MCF 10A (cell line): ENCODE measurements at regions of chr22 and their contacts with region 1.

Region 1: GRCh38 chr22:20885557-20886323 is 26.9 kb downstream of the SNAP29 start:
- DNase-seq: peak; percentile 80
- H3K4me3 Mint-ChIP-seq: no peak overlapping the region
- H3K27ac Mint-ChIP-seq: peak overlapping the region; percentile 52
- H3K4me1 Mint-ChIP-seq: peaks cover 10% of the 10 kb centered on the region
- H3K27me3 Mint-ChIP-seq: no peaks in the 10 kb centered on the region
- CTCF ChIP-seq: peak; percentile 95

Region 2: DNA sequence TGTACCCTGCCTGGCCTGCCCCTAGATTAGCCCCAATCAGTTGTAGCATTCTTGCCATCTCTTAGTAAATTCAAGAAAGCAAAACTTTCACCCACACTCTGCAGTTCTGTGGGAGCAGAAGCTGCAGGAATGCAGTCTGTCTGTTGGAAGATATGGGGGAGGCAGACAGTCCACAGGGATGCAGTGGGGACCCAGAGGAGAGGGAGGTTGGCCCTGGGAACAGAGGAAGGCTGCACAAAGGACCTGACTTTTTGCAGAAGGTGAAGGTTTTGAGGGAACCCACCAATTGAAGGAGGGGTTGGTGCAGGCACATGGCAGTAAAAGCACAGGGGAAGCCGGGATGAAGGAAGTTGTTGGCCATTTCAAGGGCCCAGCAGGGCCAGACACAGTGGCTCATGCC is 10.4 kb before region 1 on chr22:
- CTCF ChIA-PET with region 1: interaction called, 10 read pairs
- POLR2A ChIA-PET with region 1: interaction called, 5 read pairs
- intact Hi-C with region 1: no loop called
- DNase-seq: no peak
- H3K4me3 Mint-ChIP-seq: no peak overlapping the region
- H3K27ac Mint-ChIP-seq: no peak overlapping the region
- H3K4me1 Mint-ChIP-seq: no peaks in the 10 kb centered on the region
- H3K27me3 Mint-ChIP-seq: no peaks in the 10 kb centered on the region
- CTCF ChIP-seq: no peak

Region 3: DNA sequence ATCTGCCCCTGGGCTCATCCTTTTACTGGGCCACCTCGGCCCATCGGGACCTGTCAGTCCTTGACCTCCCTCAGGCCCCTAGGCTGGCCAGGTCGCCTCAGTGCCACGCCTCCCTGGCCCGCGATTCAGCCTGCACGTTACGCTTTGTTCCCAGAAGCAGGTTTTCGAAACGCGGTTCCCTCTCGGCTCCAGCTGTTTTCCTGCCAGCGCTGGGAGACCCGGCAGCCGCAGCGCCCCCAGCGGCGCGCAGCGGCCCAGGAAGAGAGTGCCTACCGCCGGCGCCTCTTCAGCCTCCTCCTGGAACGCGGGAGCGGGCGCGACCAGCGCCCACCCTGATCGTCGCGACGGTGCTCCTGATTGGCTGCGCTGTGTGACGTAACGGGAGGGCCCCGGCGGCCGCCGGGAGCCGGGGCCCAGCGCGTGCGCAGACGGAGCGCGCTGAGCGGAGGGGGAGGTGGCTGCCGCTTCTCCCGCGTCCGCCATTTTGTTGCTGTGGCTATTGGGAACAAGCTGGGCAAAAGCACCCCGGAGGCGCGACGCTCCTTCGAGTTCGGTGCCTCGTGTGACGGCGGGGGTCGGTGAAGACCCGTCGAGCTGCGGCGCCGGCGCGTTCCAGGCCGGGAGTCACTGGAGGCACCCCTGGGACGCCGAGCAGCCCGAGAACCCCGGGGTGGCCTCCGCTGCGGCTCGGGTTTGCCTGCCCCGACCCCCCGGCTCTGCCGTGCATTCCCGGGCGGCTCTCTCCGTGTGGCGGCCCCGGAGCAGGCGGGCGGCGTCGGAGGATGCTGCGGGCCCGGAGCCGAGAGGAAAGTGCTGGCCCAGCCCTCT is 31.5 kb after region 1 on chr22 and contains the start of gene CRKL:
- CTCF ChIA-PET with region 1: interaction called, 14 read pairs
- POLR2A ChIA-PET with region 1: interaction called, 12 read pairs
- intact Hi-C with region 1: loop called (anchors 1 kb)
- DNase-seq: peak; percentile 97
- H3K4me3 Mint-ChIP-seq: peak within 1 kb of the TSS; percentile 68
- H3K27ac Mint-ChIP-seq: peak within 1 kb of the TSS; percentile 39
- H3K4me1 Mint-ChIP-seq: peaks cover 24% of the 10 kb centered on the region
- H3K27me3 Mint-ChIP-seq: no peaks in the 10 kb centered on the region
- CTCF ChIP-seq: peak; percentile 81
- total RNA-seq, gene CRKL: 74.0 and 76.1 TPM in 2 replicates

Region 4: GRCh38 chr22:20956258-20957065 is 70.7 kb after region 1 on chr22:
- CTCF ChIA-PET with region 1: interaction called, 16 read pairs
- POLR2A ChIA-PET with region 1: interaction called, 7 read pairs
- intact Hi-C with region 1: loop called (anchors 1 kb)
- DNase-seq: peak; percentile 77
- H3K4me3 Mint-ChIP-seq: peak overlapping the region; percentile 71
- H3K27ac Mint-ChIP-seq: no peak overlapping the region
- H3K4me1 Mint-ChIP-seq: peaks cover 15% of the 10 kb centered on the region
- H3K27me3 Mint-ChIP-seq: no peaks in the 10 kb centered on the region
- CTCF ChIP-seq: no peak